ENCODE measurements at regions of chr3 and their contacts with region 1.

Region 1: DNA sequence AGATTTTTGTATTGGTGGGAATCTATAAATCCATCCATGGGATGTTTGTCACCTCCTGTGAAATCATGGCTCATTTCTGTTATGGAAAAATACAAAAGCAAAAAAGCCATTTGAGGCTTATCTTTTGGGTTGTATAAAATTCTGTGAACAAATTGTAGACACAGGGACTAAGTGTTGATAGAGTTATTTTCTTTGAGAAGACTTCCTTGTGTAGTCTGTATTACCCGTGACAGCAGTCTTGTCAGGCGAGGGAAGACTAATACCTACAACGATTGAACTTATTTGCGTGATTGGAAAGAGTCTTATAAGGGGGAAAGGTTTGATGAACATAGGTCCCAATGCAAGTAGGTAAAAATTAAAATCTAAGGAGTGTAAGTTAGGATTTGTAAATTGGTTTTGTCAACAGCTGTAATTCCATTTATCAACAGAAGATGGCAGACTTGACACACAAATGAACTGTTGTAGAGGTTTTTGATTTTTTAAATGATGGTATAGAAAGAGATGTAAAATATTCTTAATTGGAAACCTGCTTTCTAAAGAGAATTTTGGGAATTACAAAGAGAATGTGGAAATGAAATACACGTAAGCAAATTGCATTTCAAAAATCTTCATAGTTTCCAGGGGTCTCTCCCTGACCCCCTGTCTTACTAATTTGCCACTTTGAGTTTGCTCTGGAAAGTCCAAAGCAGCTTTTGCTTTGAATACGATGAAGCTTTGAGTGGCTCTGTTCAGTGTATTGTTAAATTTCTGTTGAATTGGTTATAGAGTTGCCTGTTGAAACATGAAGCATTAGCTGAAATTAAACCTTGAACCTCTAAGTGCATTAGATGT is 33.2 kb downstream of the SLC25A26 start:
- DNase-seq: peak; percentile 6 to 23 (median 10)
- ATAC-seq: no peak
- H3K4me3 ChIP-seq: no peak overlapping the region
- H3K27ac ChIP-seq: no peak overlapping the region
- H3K4me1 ChIP-seq: no peaks in the 10 kb centered on the region
- H3K27me3 ChIP-seq: no peaks in the 10 kb centered on the region
- CTCF ChIP-seq: peak in 2 of 3 experiments; percentile 46 to 59; a peak in 3 of 6 replicates
- EP300 ChIP-seq: no peak
- POLR2A ChIP-seq: no peak
- RAD21 ChIP-seq: peak; percentile 60 to 64

Region 2: GRCh38 chr3:65729555-65729954 is 524.5 kb before region 1 on chr3:
- CTCF ChIA-PET with region 1: no interaction called
- POLR2A ChIA-PET with region 1: no interaction called
- in situ Hi-C with region 1: no loop called
- intact Hi-C with region 1: no loop called
- DNase-seq: no peak
- ATAC-seq: no peak
- H3K4me3 ChIP-seq: no peak overlapping the region
- H3K27ac ChIP-seq: no peak overlapping the region
- H3K4me1 ChIP-seq: no peaks in the 10 kb centered on the region; a peak in 2 of 5 replicates
- H3K27me3 ChIP-seq: no peaks in the 10 kb centered on the region
- CTCF ChIP-seq: no peak
- EP300 ChIP-seq: no peak
- POLR2A ChIP-seq: no peak
- RAD21 ChIP-seq: no peak

Region 3: GRCh38 chr3:66822186-66823008 is 568.4 kb after region 1 on chr3:
- CTCF ChIA-PET with region 1: interaction called, 6 read pairs
- POLR2A ChIA-PET with region 1: interaction called, 4 read pairs
- in situ Hi-C with region 1: no loop called
- intact Hi-C with region 1: loop called (anchors 5 kb)
- DNase-seq: peak; percentile 39 to 68 (median 64)
- ATAC-seq: peak; percentile 88
- H3K4me3 ChIP-seq: no peak overlapping the region
- H3K27ac ChIP-seq: no peak overlapping the region
- H3K4me1 ChIP-seq: no peaks in the 10 kb centered on the region
- H3K27me3 ChIP-seq: no peaks in the 10 kb centered on the region
- CTCF ChIP-seq: peak; percentile 61 to 68 (median 62)
- EP300 ChIP-seq: no peak
- POLR2A ChIP-seq: no peak
- RAD21 ChIP-seq: peak; percentile 36 to 59; a peak in 3 of 4 replicates